ENCODE measurements at regions of chr20 and their contacts with region 1.

Region 1: GRCh38 chr20:64038565-64039292 is 2.7 kb downstream of the C20orf204 start:
- DNase-seq: peak; percentile 77
- H3K4me3 Mint-ChIP-seq: peak overlapping the region; percentile 65
- H3K27ac Mint-ChIP-seq: no peak overlapping the region
- H3K4me1 Mint-ChIP-seq: peaks cover 9% of the 10 kb centered on the region
- H3K27me3 Mint-ChIP-seq: no peaks in the 10 kb centered on the region
- CTCF ChIP-seq: peak; percentile 79

Region 2: GRCh38 chr20:63830841-63831588 is 207.7 kb before region 1 on chr20 and contains the start of gene ZBTB46:
- CTCF ChIA-PET with region 1: no interaction called
- POLR2A ChIA-PET with region 1: no interaction called
- intact Hi-C with region 1: no loop called
- DNase-seq: peak; percentile 37
- H3K4me3 Mint-ChIP-seq: peak within 1 kb of the TSS; percentile 62
- H3K27ac Mint-ChIP-seq: no peak within 1 kb of the TSS
- H3K4me1 Mint-ChIP-seq: peaks cover 5% of the 10 kb centered on the region
- H3K27me3 Mint-ChIP-seq: peaks cover 19% of the 10 kb centered on the region
- CTCF ChIP-seq: no peak
- total RNA-seq, gene ZBTB46: 0.63 and 0.71 TPM in 2 replicates

Region 3: DNA sequence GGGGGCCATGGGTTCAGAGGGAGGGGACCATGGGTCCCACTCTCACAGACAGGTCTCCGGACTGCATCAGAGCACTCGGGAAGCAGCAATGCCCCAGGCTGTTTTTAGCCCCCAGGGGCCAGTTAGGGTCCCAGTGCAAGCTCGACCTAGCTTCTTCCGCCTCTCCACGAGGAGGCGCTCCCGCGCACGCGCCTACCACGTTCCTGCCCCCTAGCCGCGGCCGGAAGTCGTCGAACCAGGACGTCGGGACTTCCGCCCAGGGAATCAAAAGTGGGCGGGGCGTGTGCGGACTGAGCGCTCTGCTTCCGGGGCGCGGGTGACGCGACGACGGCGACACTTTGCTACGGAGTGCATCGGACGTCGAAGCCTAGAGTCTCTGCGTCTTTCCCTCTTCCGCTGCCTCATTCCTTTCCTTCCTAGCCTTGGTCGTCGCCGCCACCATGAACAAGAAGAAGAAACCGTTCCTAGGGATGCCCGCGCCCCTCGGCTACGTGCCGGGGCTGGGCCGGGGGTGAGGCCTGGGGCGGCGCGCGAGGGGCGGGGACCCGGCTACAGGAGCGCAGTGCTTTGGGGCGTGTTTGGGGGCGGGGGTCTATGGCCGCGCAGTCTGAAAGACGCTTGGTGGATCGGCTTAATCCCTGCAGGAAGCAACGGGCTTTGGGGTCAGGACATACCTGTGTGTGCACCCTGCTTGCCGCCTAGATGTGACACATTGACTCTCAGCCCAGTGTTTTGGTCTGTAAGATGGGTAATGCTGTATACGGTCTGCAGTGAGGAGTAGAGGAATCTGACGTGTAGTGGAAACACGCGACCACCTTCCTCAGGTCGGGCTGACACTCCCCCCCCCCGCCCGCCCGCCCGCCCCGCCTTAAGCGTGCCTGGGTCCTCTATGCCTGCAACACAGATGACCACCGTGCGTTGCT is 57.7 kb before region 1 on chr20 and contains the start of gene PRPF6:
- CTCF ChIA-PET with region 1: interaction called, 19 read pairs
- POLR2A ChIA-PET with region 1: interaction called, 26 read pairs
- intact Hi-C with region 1: loop called (anchors 2 kb)
- DNase-seq: peak; percentile 96
- H3K4me3 Mint-ChIP-seq: peak within 1 kb of the TSS; percentile 79
- H3K27ac Mint-ChIP-seq: peak within 1 kb of the TSS; percentile 92
- H3K4me1 Mint-ChIP-seq: peaks cover 30% of the 10 kb centered on the region
- H3K27me3 Mint-ChIP-seq: no peaks in the 10 kb centered on the region
- CTCF ChIP-seq: peak; percentile 77
- total RNA-seq, gene PRPF6: 70.9 and 88.5 TPM in 2 replicates

Region 4: GRCh38 chr20:64024141-64024990 is 14.4 kb before region 1 on chr20:
- CTCF ChIA-PET with region 1: interaction called, 38 read pairs
- POLR2A ChIA-PET with region 1: no interaction called
- intact Hi-C with region 1: no loop called
- DNase-seq: no peak
- H3K4me3 Mint-ChIP-seq: no peak overlapping the region
- H3K27ac Mint-ChIP-seq: no peak overlapping the region
- H3K4me1 Mint-ChIP-seq: no peaks in the 10 kb centered on the region
- H3K27me3 Mint-ChIP-seq: no peaks in the 10 kb centered on the region
- CTCF ChIP-seq: no peak

Region 5: DNA sequence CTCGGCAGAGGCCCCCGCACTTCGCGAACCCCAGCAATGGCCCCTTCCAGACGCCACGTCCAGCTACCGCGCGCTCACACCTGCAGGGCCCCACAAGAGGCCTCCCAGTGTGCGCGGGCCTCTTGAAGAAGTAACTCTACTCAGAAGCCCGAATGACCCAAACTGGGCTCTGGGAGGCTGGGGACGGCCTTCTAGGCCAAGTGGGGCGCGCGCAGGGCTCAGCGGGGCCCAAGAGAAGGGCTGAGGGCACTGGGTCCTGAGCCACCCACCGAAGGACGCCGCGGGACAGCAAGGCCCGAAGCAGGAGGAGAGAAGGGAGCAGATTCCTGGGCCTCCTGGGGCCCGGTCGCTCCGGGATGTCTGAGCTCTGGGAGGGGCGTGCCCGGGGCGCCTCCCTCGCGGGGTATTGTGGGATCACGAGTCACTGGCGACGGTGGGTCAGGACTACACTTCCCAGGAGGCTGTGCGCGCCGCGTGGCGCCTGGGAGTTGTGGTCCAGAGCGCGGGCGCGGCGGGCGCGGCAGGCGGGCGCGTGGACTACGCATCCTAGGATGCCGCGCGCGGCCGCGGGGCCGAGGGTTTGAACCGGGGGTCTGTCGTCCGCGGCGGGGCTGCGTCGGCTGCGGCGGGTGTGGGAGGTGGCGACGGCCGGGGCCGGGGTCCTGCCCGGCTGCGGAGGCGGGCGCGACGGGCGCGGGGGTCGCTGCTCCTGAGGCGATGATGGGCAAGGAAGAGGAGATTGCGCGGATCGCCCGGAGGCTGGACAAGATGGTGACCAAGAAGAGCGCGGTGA is 24.1 kb after region 1 on chr20 and contains the start of gene TCEA2:
- CTCF ChIA-PET with region 1: interaction called, 284 read pairs
- POLR2A ChIA-PET with region 1: interaction called, 21 read pairs
- intact Hi-C with region 1: loop called (anchors 1 kb)
- DNase-seq: peak; percentile 95
- H3K4me3 Mint-ChIP-seq: peak within 1 kb of the TSS; percentile 88
- H3K27ac Mint-ChIP-seq: peak within 1 kb of the TSS; percentile 89
- H3K4me1 Mint-ChIP-seq: peaks cover 41% of the 10 kb centered on the region
- H3K27me3 Mint-ChIP-seq: no peaks in the 10 kb centered on the region
- CTCF ChIP-seq: no peak
- total RNA-seq, gene TCEA2: 30.8 and 39.7 TPM in 2 replicates

Region 6: DNA sequence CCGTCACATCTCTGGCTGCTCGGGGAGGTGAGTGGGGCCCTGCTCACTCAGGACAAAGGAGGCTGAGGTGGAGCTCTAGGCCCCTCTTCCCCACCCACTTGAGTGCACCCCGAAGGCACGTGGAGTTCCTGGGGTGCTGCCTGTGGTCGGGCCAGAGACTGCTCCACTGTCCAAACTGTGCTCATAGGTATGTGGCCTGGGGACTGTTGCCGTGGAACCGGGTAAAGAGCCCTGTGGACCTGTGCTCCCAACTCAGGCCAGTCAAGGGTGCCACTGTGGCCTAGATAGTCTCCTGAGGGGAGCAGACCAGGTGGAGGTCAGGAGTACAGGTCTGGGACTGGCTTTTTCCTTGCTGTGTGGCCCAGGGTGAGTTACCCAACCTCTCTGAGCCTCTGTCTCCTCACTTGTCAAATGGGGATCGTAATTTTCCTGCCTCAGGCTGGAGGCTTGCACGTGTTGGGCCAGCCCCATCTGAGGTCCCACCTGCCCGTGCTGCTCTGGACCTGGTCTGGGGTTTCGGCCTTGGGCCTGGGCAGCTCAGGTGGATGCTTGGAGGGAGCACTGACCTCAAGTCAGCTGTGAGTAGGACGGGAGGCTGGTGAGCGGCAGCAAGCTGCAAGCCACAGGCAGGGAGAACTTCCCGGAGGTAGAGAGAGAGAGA is 81.1 kb after region 1 on chr20:
- CTCF ChIA-PET with region 1: interaction called, 49 read pairs
- POLR2A ChIA-PET with region 1: interaction called, 6 read pairs
- intact Hi-C with region 1: loop called (anchors 1 kb)
- DNase-seq: no peak
- H3K4me3 Mint-ChIP-seq: no peak overlapping the region
- H3K27ac Mint-ChIP-seq: no peak overlapping the region
- H3K4me1 Mint-ChIP-seq: no peaks in the 10 kb centered on the region
- H3K27me3 Mint-ChIP-seq: peaks cover 38% of the 10 kb centered on the region
- CTCF ChIP-seq: no peak